ENCODE measurements at regions of chr2 and their contacts with region 1.

Region 1: DNA sequence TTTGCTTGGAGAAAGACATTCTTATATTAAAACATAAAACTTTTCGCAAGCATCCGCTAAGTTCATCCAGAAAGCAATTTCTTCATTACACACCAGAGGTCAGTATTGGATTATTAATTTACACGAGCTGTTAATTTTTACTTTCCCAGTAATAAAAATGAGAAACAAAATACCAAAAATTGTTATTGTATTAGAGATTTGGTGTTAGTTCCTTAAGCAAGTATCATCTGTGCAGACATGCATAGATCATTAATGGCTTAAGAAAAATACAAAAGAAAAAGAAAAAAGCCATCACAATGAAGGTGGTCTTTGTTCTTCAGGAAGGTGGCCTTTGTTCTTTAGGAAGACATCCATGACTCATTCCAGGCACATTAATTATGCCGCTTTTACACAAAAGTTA is 53.6 kb upstream of the HNMT start:
- DNase-seq: no peak
- ATAC-seq: no peak
- H3K4me3 ChIP-seq: no peak overlapping the region
- H3K27ac ChIP-seq: no peak overlapping the region
- H3K4me1 ChIP-seq: no peaks in the 10 kb centered on the region
- H3K27me3 ChIP-seq: no peaks in the 10 kb centered on the region
- CTCF ChIP-seq: peak in 4 of 5 experiments; percentile 33 to 54 (median 46)
- POLR2A ChIP-seq: no peak

Region 2: GRCh38 chr2:137865954-137866540 is 44.6 kb before region 1 on chr2:
- in situ Hi-C with region 1: no loop called
- intact Hi-C with region 1: no loop called
- DNase-seq: no peak
- ATAC-seq: no peak
- H3K4me3 ChIP-seq: no peak overlapping the region
- H3K27ac ChIP-seq: no peak overlapping the region
- H3K4me1 ChIP-seq: no peaks in the 10 kb centered on the region
- H3K27me3 ChIP-seq: no peaks in the 10 kb centered on the region
- CTCF ChIP-seq: peak in 2 of 5 experiments; percentile 35 to 39
- POLR2A ChIP-seq: no peak

Region 3: DNA sequence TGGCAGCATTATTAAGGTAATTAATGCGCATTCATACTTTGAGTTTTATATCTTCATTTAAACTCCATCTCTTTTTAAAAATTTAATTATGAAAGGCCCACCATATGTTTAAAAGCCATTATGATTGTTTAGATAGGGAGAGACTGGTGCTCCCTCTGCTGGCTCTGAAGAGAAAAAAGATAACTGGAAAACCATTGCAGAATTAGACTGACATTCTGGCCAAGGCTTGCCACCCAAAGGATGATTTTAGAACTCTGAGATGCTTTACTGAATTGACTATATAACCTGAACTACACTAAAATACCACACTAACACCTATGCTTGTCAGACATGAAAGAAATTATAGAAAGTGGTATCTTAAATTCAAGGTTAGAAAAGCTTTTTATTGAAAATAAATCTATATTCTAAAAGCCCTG is 463.4 kb after region 1 on chr2:
- in situ Hi-C with region 1: loop called in 1 of 4 experiments (anchors 25 kb)
- intact Hi-C with region 1: loop called (anchors 10 kb)
- DNase-seq: no peak
- ATAC-seq: no peak
- H3K4me3 ChIP-seq: no peak overlapping the region
- H3K27ac ChIP-seq: no peak overlapping the region
- H3K4me1 ChIP-seq: no peaks in the 10 kb centered on the region
- H3K27me3 ChIP-seq: no peaks in the 10 kb centered on the region
- CTCF ChIP-seq: peak in 4 of 5 experiments; percentile 10 to 48 (median 24)
- POLR2A ChIP-seq: no peak

Region 4: GRCh38 chr2:138395565-138396306 is 485.1 kb after region 1 on chr2:
- in situ Hi-C with region 1: loop called in 1 of 4 experiments (anchors 25 kb)
- intact Hi-C with region 1: no loop called
- DNase-seq: peak in 1 of 2 donors; percentile 16
- ATAC-seq: peak in 1 of 2 donors; percentile 36
- H3K4me3 ChIP-seq: no peak overlapping the region
- H3K27ac ChIP-seq: no peak overlapping the region
- H3K4me1 ChIP-seq: no peaks in the 10 kb centered on the region
- H3K27me3 ChIP-seq: no peaks in the 10 kb centered on the region
- CTCF ChIP-seq: no peak
- POLR2A ChIP-seq: no peak

Region 5: DNA sequence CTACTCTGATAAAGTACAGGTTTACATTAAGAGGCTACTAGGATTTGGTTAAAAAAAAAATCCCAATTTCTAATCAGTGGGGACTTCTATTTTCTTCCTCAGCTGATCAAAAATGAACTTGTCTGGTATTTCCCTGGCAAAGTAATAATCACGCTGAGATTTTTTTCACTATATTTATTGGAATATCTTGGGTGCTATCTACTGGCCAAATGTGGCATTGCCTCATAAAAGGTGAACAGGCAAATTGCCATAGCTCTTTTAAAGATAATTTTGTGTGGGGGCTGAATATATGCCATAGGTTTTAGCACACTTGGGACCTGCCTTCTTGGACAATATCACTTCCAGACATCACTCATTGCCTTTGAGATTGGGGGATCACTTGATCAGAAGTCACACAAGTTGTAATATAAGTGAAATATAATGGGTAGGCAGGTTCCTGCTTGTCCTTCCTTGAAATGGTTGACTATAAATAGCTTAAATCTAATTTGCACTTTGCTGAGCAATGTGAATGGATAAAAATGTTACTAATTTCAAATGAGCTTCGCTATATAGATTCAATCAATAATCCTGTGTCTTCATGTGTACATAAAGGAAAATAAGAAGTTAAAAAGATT is 876.5 kb after region 1 on chr2:
- in situ Hi-C with region 1: loop called in 1 of 4 experiments (anchors 10 kb)
- intact Hi-C with region 1: no loop called
- DNase-seq: no peak
- ATAC-seq: no peak
- H3K4me3 ChIP-seq: no peak overlapping the region
- H3K27ac ChIP-seq: no peak overlapping the region
- H3K4me1 ChIP-seq: no peaks in the 10 kb centered on the region
- H3K27me3 ChIP-seq: no peaks in the 10 kb centered on the region
- CTCF ChIP-seq: peak; percentile 38 to 61 (median 41)
- POLR2A ChIP-seq: no peak

Region 6: GRCh38 chr2:138827426-138828054 is 916.9 kb after region 1 on chr2:
- in situ Hi-C with region 1: loop called (anchors 10 to 25 kb)
- intact Hi-C with region 1: no loop called
- DNase-seq: no peak
- ATAC-seq: peak; percentile 56 to 65
- H3K4me3 ChIP-seq: no peak overlapping the region
- H3K27ac ChIP-seq: no peak overlapping the region
- H3K4me1 ChIP-seq: no peaks in the 10 kb centered on the region
- H3K27me3 ChIP-seq: no peaks in the 10 kb centered on the region
- CTCF ChIP-seq: peak; percentile 51 to 74 (median 55)
- POLR2A ChIP-seq: no peak